ENCODE measurements at regions of chr19 and their contacts with region 1.

Region 1: DNA sequence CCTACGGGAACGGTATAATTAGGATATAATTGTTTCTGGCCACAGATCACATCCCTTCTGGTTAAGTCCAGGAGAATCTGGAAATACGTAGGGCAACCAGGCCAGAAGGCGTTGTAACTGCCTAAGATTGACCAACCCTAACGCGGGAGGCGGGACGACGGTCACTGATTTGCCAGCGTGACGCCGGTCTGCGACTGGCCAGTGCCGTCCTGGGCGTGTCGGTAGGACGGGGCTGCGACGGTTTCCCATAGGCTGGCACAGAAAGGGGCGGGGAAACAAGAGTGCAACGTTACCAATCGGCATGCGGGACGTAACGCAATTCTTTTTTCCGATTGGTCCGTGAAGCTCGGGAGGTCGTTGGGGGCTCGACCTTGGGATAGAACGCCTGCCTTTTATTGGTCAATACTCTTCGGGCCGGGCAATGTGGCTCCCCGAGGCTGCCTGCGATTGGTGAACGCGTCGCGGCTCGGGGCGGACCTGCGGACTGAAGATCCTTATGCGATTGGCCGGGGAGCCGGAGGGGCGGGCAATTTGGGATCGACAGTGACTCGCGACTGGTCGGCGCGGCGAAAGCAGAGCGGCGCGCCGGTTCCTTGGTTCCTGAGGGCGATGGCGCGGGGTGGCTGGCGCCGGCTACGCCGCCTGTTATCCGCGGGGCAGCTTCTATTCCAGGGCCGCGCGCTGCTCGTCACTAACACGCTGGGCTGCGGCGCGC is at the start of gene MPV17L2:
- DNase-seq: peak; percentile 99
- ATAC-seq: peak; percentile 95
- H3K4me3 Mint-ChIP-seq: peak within 1 kb of the TSS; percentile 79
- H3K27ac Mint-ChIP-seq: peak within 1 kb of the TSS; percentile 91
- H3K4me1 Mint-ChIP-seq: peaks cover 22% of the 10 kb centered on the region
- H3K27me3 Mint-ChIP-seq: no peaks in the 10 kb centered on the region
- total RNA-seq, gene MPV17L2: 5.7 to 6.2 TPM

Region 2: GRCh38 chr19:17766543-17767131 is 426.2 kb before region 1 on chr19:
- CTCF ChIA-PET with region 1: no interaction called
- POLR2A ChIA-PET with region 1: no interaction called
- intact Hi-C with region 1: no loop called
- DNase-seq: peak; percentile 71
- ATAC-seq: peak; percentile 61
- H3K4me3 Mint-ChIP-seq: no peak overlapping the region
- H3K27ac Mint-ChIP-seq: no peak overlapping the region
- H3K4me1 Mint-ChIP-seq: peaks cover 5% of the 10 kb centered on the region
- H3K27me3 Mint-ChIP-seq: no peaks in the 10 kb centered on the region

Region 3: GRCh38 chr19:18000935-18001778 is 191.7 kb before region 1 on chr19:
- CTCF ChIA-PET with region 1: no interaction called
- POLR2A ChIA-PET with region 1: no interaction called
- intact Hi-C with region 1: loop called in 1 of 2 experiments (anchors 1 kb)
- DNase-seq: peak; percentile 95
- ATAC-seq: peak; percentile 84
- H3K4me3 Mint-ChIP-seq: peak overlapping the region; percentile 85
- H3K27ac Mint-ChIP-seq: peak overlapping the region; percentile 95
- H3K4me1 Mint-ChIP-seq: peaks cover 25% of the 10 kb centered on the region
- H3K27me3 Mint-ChIP-seq: no peaks in the 10 kb centered on the region

Region 4: DNA sequence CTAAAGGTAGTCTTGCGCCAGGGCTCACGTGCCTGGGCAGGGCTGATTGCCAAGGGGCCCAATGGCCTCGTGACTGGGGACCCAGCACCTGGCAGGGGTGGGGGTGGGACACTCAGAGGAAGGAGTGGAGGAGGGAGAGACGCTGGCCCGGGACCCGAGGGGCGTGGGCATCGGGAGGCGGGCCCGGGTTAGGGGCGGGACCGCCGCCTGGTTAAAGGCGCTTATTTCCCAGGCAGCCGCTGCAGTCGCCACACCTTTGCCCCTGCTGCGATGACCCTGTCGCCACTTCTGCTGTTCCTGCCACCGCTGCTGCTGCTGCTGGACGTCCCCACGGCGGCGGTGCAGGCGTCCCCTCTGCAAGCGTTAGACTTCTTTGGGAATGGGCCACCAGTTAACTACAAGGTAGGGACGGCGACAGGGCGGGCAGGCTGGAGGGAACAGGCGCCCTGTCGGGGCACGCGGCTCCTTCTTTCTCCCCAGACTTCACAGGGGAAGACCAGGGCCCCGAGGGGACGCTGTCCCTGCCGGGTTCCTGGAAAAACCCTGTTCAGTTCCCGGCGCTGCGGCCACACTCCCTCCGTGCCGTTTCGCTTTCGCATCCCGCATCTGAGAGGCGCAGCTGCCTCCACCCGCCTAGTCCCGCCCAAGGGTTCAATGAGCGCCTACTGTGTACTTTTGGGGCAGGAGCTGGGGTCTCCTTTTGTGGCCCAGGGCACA is 19.1 kb before region 1 on chr19 and contains the start of gene IFI30:
- CTCF ChIA-PET with region 1: interaction called, 7 read pairs
- POLR2A ChIA-PET with region 1: interaction called, 3 read pairs
- intact Hi-C with region 1: loop called in 1 of 2 experiments (anchors 1 kb)
- DNase-seq: peak; percentile 80
- ATAC-seq: peak; percentile 86
- H3K4me3 Mint-ChIP-seq: peak within 1 kb of the TSS; percentile 80
- H3K27ac Mint-ChIP-seq: peak within 1 kb of the TSS; percentile 65
- H3K4me1 Mint-ChIP-seq: peaks cover 15% of the 10 kb centered on the region
- H3K27me3 Mint-ChIP-seq: no peaks in the 10 kb centered on the region
- total RNA-seq, gene IFI30: 20.4 to 29.5 TPM

Region 5: GRCh38 chr19:18251587-18252369 is 58.9 kb after region 1 on chr19:
- CTCF ChIA-PET with region 1: interaction called, 6 read pairs
- POLR2A ChIA-PET with region 1: no interaction called
- intact Hi-C with region 1: loop called in 1 of 2 experiments (anchors 1 kb)
- DNase-seq: peak; percentile 89
- ATAC-seq: peak; percentile 95
- H3K4me3 Mint-ChIP-seq: no peak overlapping the region
- H3K27ac Mint-ChIP-seq: no peak overlapping the region
- H3K4me1 Mint-ChIP-seq: no peaks in the 10 kb centered on the region
- H3K27me3 Mint-ChIP-seq: peaks cover 21% of the 10 kb centered on the region

Region 6: GRCh38 chr19:18322759-18323460 is 130.1 kb after region 1 on chr19 and contains the start of gene LSM4:
- CTCF ChIA-PET with region 1: interaction called, 4 read pairs
- POLR2A ChIA-PET with region 1: interaction called, 3 read pairs
- intact Hi-C with region 1: loop called (anchors 1 kb)
- DNase-seq: peak; percentile 100
- ATAC-seq: peak; percentile 94
- H3K4me3 Mint-ChIP-seq: peak within 1 kb of the TSS; percentile 90
- H3K27ac Mint-ChIP-seq: peak within 1 kb of the TSS; percentile 98
- H3K4me1 Mint-ChIP-seq: peaks cover 54% of the 10 kb centered on the region
- H3K27me3 Mint-ChIP-seq: no peaks in the 10 kb centered on the region
- total RNA-seq, gene LSM4: 269 to 370 TPM

Region 7: GRCh38 chr19:18419195-18419698 is 226.4 kb after region 1 on chr19 and contains the start of gene SSBP4:
- CTCF ChIA-PET with region 1: interaction called, 3 read pairs
- POLR2A ChIA-PET with region 1: no interaction called
- intact Hi-C with region 1: loop called in 1 of 2 experiments (anchors 1 kb)
- DNase-seq: peak; percentile 82
- ATAC-seq: peak; percentile 45
- H3K4me3 Mint-ChIP-seq: peak within 1 kb of the TSS; percentile 90
- H3K27ac Mint-ChIP-seq: peak within 1 kb of the TSS; percentile 80
- H3K4me1 Mint-ChIP-seq: peaks cover 79% of the 10 kb centered on the region
- H3K27me3 Mint-ChIP-seq: peaks cover 23% of the 10 kb centered on the region
- total RNA-seq, gene SSBP4: 71.7 to 79.3 TPM

Region 8: GRCh38 chr19:18488838-18489626 is 296.2 kb after region 1 on chr19:
- CTCF ChIA-PET with region 1: no interaction called
- POLR2A ChIA-PET with region 1: no interaction called
- intact Hi-C with region 1: no loop called
- DNase-seq: peak; percentile 30
- ATAC-seq: no peak
- H3K4me3 Mint-ChIP-seq: no peak overlapping the region
- H3K27ac Mint-ChIP-seq: no peak overlapping the region
- H3K4me1 Mint-ChIP-seq: peaks cover 37% of the 10 kb centered on the region
- H3K27me3 Mint-ChIP-seq: no peaks in the 10 kb centered on the region

Region 9: GRCh38 chr19:18571564-18572300 is 378.9 kb after region 1 on chr19 and contains the start of gene UBA52:
- CTCF ChIA-PET with region 1: no interaction called
- POLR2A ChIA-PET with region 1: no interaction called
- intact Hi-C with region 1: loop called in 1 of 2 experiments (anchors 1 kb)
- DNase-seq: peak; percentile 100
- ATAC-seq: peak; percentile 94
- H3K4me3 Mint-ChIP-seq: peak within 1 kb of the TSS; percentile 89
- H3K27ac Mint-ChIP-seq: peak within 1 kb of the TSS; percentile 95
- H3K4me1 Mint-ChIP-seq: peaks cover 27% of the 10 kb centered on the region
- H3K27me3 Mint-ChIP-seq: no peaks in the 10 kb centered on the region
- total RNA-seq, gene UBA52: 1,703 to 2,296 TPM